CD14-positive monocyte (primary cell): ENCODE measurements at regions of chr14 and their contacts with region 1.

Region 1: GRCh38 chr14:72786378-72787350 is 107.2 kb downstream of the DPF3 start:
- DNase-seq: no peak
- H3K4me3 ChIP-seq: no peak overlapping the region
- H3K4me3 Mint-ChIP-seq: no peak overlapping the region
- H3K27ac ChIP-seq: no peak overlapping the region
- H3K27ac Mint-ChIP-seq: no peak overlapping the region
- H3K4me1 ChIP-seq: no peaks in the 10 kb centered on the region
- H3K4me1 Mint-ChIP-seq: peaks cover 2% of the 10 kb centered on the region
- H3K27me3 ChIP-seq: no peaks in the 10 kb centered on the region
- H3K27me3 Mint-ChIP-seq: peaks cover 2 to 10% (median 3%) of the 10 kb centered on the region in 3 donors
- CTCF ChIP-seq: no peak

Region 2: GRCh38 chr14:72766296-72766695 is 20.4 kb before region 1 on chr14:
- intact Hi-C with region 1: loop called in 1 of 2 experiments (anchors 2 kb)
- DNase-seq: no peak
- H3K4me3 ChIP-seq: no peak overlapping the region
- H3K4me3 Mint-ChIP-seq: no peak overlapping the region
- H3K27ac ChIP-seq: no peak overlapping the region
- H3K27ac Mint-ChIP-seq: no peak overlapping the region
- H3K4me1 ChIP-seq: no peaks in the 10 kb centered on the region
- H3K4me1 Mint-ChIP-seq: no peaks in the 10 kb centered on the region
- H3K27me3 ChIP-seq: no peaks in the 10 kb centered on the region
- H3K27me3 Mint-ChIP-seq: peaks cover 1 to 5% (median 3%) of the 10 kb centered on the region in 3 donors
- CTCF ChIP-seq: no peak

Region 3: DNA sequence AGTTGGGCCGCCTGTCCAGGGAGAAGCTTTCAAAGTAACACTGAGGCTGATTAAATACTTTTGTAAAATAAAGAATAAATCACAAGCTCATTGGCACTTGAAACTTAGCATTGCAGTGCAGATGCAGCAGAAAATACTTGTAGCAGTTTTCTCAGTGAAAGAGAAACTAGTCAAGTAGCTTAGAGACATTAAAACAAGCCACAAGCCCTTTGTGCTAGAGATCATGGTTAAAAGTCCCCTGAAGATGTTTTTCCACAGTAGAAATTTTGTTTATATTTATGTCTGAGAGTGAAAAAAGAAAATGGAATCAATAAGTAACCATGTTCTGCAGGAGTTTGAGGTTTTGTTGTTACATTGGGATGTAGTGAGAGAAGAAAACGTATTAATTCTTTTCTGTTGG is 355.6 kb after region 1 on chr14:
- intact Hi-C with region 1: no loop called
- DNase-seq: no peak
- H3K4me3 ChIP-seq: no peak overlapping the region
- H3K4me3 Mint-ChIP-seq: no peak overlapping the region
- H3K27ac ChIP-seq: peak overlapping the region in 1 of 2 donors; percentile 42
- H3K27ac Mint-ChIP-seq: no peak overlapping the region
- H3K4me1 ChIP-seq: peaks cover 8 to 11% of the 10 kb centered on the region in 2 donors
- H3K4me1 Mint-ChIP-seq: peaks cover 38% of the 10 kb centered on the region
- H3K27me3 ChIP-seq: no peaks in the 10 kb centered on the region
- H3K27me3 Mint-ChIP-seq: no peaks in the 10 kb centered on the region
- CTCF ChIP-seq: no peak